Natural killer cell (primary cell): ENCODE measurements at regions of chr6 and their contacts with region 1.

Region 1: GRCh38 chr6:34671801-34672656 is 24.5 kb downstream of the ILRUN start:
- DNase-seq: peak; percentile 70 to 91
- ATAC-seq: peak; percentile 91 to 99 (median 98)
- H3K4me3 ChIP-seq: peak overlapping the region; percentile 6
- H3K4me3 Mint-ChIP-seq: peak overlapping the region; percentile 88
- H3K27ac ChIP-seq: peak overlapping the region; percentile 92
- H3K27ac Mint-ChIP-seq: peak overlapping the region; percentile 88 to 97
- H3K4me1 ChIP-seq: peaks cover 49% of the 10 kb centered on the region
- H3K4me1 Mint-ChIP-seq: peaks cover 48 to 57% of the 10 kb centered on the region in 2 donors
- H3K27me3 ChIP-seq: no peaks in the 10 kb centered on the region
- H3K27me3 Mint-ChIP-seq: no peaks in the 10 kb centered on the region
- CTCF ChIP-seq: no peak

Region 2: DNA sequence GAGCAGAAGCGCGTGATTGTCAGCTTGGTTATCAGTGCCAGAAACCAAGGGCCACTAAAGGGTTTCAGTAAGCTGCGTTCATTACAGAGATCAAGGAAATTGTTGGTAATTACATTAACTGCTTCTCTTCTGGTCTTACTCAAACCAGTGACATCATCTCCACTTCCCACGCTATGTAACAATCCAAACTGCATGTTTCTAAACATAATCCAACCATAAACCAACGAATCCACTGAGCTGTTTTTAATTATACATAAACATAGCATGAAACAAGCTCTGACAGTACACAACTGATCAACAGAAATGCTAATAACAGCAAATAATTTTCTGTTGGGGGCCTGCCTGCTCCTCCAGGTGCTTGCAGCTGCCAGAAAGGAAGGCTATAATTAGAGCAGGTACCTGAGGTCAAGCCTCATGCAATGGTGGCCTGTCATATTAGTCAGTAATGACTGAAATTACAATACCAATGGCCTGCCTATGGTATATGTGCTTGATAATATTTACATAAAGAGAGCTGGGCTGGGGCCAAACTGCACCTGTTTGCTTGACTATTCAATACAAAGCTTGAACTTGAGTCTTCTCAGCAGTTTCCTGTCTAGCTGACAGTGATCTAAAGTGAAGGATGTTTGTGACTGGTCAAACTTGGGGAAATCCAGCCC is 15.5 kb before region 1 on chr6:
- intact Hi-C with region 1: loop called (anchors 2 kb)
- DNase-seq: peak in 1 of 2 donors; percentile 61
- ATAC-seq: peak; percentile 60 to 70 (median 67)
- H3K4me3 ChIP-seq: peak overlapping the region; percentile 22
- H3K4me3 Mint-ChIP-seq: peak overlapping the region; percentile 82
- H3K27ac ChIP-seq: peak overlapping the region; percentile 72
- H3K27ac Mint-ChIP-seq: peak overlapping the region; percentile 88 to 91
- H3K4me1 ChIP-seq: peaks cover 17% of the 10 kb centered on the region
- H3K4me1 Mint-ChIP-seq: peaks cover 36 to 39% of the 10 kb centered on the region in 2 donors
- H3K27me3 ChIP-seq: no peaks in the 10 kb centered on the region
- H3K27me3 Mint-ChIP-seq: no peaks in the 10 kb centered on the region
- CTCF ChIP-seq: no peak